T-cell (primary cell): ENCODE measurements at regions of chr15 and their contacts with region 1.

Region 1: DNA sequence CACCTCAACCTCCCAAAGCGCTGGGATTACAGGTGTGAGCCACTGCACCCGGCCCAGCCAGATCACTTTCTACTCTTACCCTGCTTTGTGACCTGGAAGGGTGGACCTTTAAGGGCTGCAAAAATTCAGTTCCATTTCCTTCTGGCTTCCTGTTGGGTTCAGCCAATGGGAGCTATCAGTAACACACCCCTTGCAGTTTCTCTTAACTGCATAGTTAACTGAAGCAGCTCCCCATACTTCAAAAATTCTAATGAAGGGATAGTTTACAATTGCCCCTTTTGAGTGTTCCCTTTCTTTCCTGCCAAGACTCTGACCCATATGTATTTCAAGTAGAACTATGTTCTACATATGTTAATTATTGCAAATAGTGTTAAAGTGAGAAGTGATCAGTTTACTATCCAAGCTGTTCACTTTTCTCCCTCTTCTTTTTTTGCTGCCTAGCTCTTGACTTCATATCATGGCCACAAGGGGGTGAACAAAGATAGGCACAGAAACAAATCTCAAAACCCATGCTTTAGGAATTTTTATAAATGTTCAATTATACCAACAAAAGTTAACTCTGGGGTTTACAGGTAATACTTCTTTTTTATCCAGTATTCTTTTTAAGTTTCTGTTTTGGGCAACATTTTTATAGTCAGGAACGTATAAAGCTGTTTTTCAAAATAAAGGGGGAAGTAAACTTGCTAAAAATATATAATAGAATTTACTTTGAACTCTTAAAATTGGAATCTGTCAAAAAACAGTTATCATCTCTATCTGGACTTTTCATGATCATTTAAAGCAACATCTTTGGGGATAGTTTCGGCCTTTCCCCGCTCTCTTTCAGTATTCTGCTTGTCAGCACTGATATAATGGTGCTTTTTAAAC is 8.1 kb downstream of the PGBD4 start:
- DNase-seq: peak in 1 of 35 experiments; percentile 47
- ATAC-seq: no peak
- H3K4me3 ChIP-seq: no peak overlapping the region
- H3K4me3 Mint-ChIP-seq: no peak overlapping the region
- H3K27ac ChIP-seq: no peak overlapping the region
- H3K27ac Mint-ChIP-seq: no peak overlapping the region
- H3K4me1 ChIP-seq: no peaks in the 10 kb centered on the region
- H3K4me1 Mint-ChIP-seq: no peaks in the 10 kb centered on the region
- H3K27me3 ChIP-seq: peaks cover 0 to 14% of the 10 kb centered on the region in 2 experiments
- H3K27me3 Mint-ChIP-seq: peaks cover 7 to 11% of the 10 kb centered on the region in 2 donors

Region 2: GRCh38 chr15:33654860-33655259 is 455.2 kb before region 1 on chr15:
- CTCF ChIA-PET with region 1: no interaction called
- POLR2A ChIA-PET with region 1: no interaction called
- DNase-seq: no peak
- ATAC-seq: no peak
- H3K4me3 ChIP-seq: no peak overlapping the region
- H3K4me3 Mint-ChIP-seq: no peak overlapping the region
- H3K27ac ChIP-seq: no peak overlapping the region
- H3K27ac Mint-ChIP-seq: no peak overlapping the region
- H3K4me1 ChIP-seq: no peaks in the 10 kb centered on the region
- H3K4me1 Mint-ChIP-seq: no peaks in the 10 kb centered on the region
- H3K27me3 ChIP-seq: no peaks in the 10 kb centered on the region
- H3K27me3 Mint-ChIP-seq: peaks cover 2 to 3% of the 10 kb centered on the region in 2 donors

Region 3: GRCh38 chr15:34182942-34183341 is 72.9 kb after region 1 on chr15:
- CTCF ChIA-PET with region 1: interaction called in 1 of 2 experiments, 12 read pairs
- POLR2A ChIA-PET with region 1: no interaction called
- DNase-seq: no peak
- ATAC-seq: no peak
- H3K4me3 ChIP-seq: no peak overlapping the region
- H3K4me3 Mint-ChIP-seq: no peak overlapping the region
- H3K27ac ChIP-seq: no peak overlapping the region
- H3K27ac Mint-ChIP-seq: no peak overlapping the region
- H3K4me1 ChIP-seq: no peaks in the 10 kb centered on the region
- H3K4me1 Mint-ChIP-seq: peaks cover 12 to 25% (median 19%) of the 10 kb centered on the region in 3 donors
- H3K27me3 ChIP-seq: no peaks in the 10 kb centered on the region
- H3K27me3 Mint-ChIP-seq: no peaks in the 10 kb centered on the region

Region 4: GRCh38 chr15:34209421-34210282 is 99.6 kb after region 1 on chr15 and contains the start of gene KATNBL1:
- CTCF ChIA-PET with region 1: interaction called, 3 to 10 read pairs
- POLR2A ChIA-PET with region 1: no interaction called
- DNase-seq: peak; percentile 83 to 97 (median 93)
- ATAC-seq: peak; percentile 92 to 97 (median 95)
- H3K4me3 ChIP-seq: peak within 1 kb of the TSS; percentile 63 to 68
- H3K4me3 Mint-ChIP-seq: peak within 1 kb of the TSS; percentile 81 to 90 (median 88)
- H3K27ac ChIP-seq: peak within 1 kb of the TSS; percentile 25
- H3K27ac Mint-ChIP-seq: peak within 1 kb of the TSS; percentile 61 to 79
- H3K4me1 ChIP-seq: peaks cover 3 to 8% of the 10 kb centered on the region in 2 experiments
- H3K4me1 Mint-ChIP-seq: peaks cover 21 to 26% (median 22%) of the 10 kb centered on the region in 3 donors
- H3K27me3 ChIP-seq: no peaks in the 10 kb centered on the region
- H3K27me3 Mint-ChIP-seq: no peaks in the 10 kb centered on the region
- total RNA-seq, gene KATNBL1: 27.1 to 37.3 (median 29.5) TPM